HCT116 (cell line): ENCODE measurements at regions of chr5 and their contacts with region 1.

Region 1: GRCh38 chr5:168219515-168220410 is 71.7 kb upstream of the WWC1 start:
- DNase-seq: peak; percentile 68
- ATAC-seq: peak; percentile 88
- H3K4me3 ChIP-seq: no peak overlapping the region; a peak in 1 of 4 replicates
- H3K27ac ChIP-seq: no peak overlapping the region
- H3K4me1 ChIP-seq: peaks cover 0 to 4% of the 10 kb centered on the region in 2 experiments; a peak in 2 of 4 replicates
- H3K27me3 ChIP-seq: peaks cover 28% of the 10 kb centered on the region
- CTCF ChIP-seq: peak; percentile 76 to 89 (median 83)
- POLR2A ChIP-seq: no peak
- RAD21 ChIP-seq: peak; percentile 89

Region 2: GRCh38 chr5:167582283-167582682 is 637.5 kb before region 1 on chr5:
- CTCF ChIA-PET with region 1: no interaction called
- POLR2A ChIA-PET with region 1: no interaction called
- RAD21 ChIA-PET with region 1: no interaction called
- intact Hi-C with region 1: loop called (anchors 2 kb)
- DNase-seq: no peak
- ATAC-seq: no peak
- H3K4me3 ChIP-seq: no peak overlapping the region
- H3K27ac ChIP-seq: no peak overlapping the region
- H3K4me1 ChIP-seq: no peaks in the 10 kb centered on the region
- H3K27me3 ChIP-seq: peaks cover 23% of the 10 kb centered on the region
- CTCF ChIP-seq: peak in 1 of 3 experiments; percentile 40; a peak in 1 of 6 replicates
- POLR2A ChIP-seq: no peak
- RAD21 ChIP-seq: peak; percentile 38; the same call in 1 of the 2 replicates

Region 3: GRCh38 chr5:167723254-167723871 is 496.4 kb before region 1 on chr5:
- CTCF ChIA-PET with region 1: interaction called, 5 read pairs
- POLR2A ChIA-PET with region 1: no interaction called
- RAD21 ChIA-PET with region 1: no interaction called
- intact Hi-C with region 1: loop called (anchors 2 kb)
- DNase-seq: peak; percentile 72
- ATAC-seq: peak; percentile 98
- H3K4me3 ChIP-seq: no peak overlapping the region
- H3K27ac ChIP-seq: no peak overlapping the region
- H3K4me1 ChIP-seq: peaks cover 0 to 9% of the 10 kb centered on the region in 2 experiments; a peak in 2 of 4 replicates
- H3K27me3 ChIP-seq: no peaks in the 10 kb centered on the region
- CTCF ChIP-seq: peak; percentile 55 to 93 (median 88); a peak in 5 of 6 replicates
- POLR2A ChIP-seq: no peak
- RAD21 ChIP-seq: peak; percentile 66

Region 4: GRCh38 chr5:168047043-168047668 is 172.6 kb before region 1 on chr5:
- CTCF ChIA-PET with region 1: no interaction called
- POLR2A ChIA-PET with region 1: no interaction called
- RAD21 ChIA-PET with region 1: no interaction called
- intact Hi-C with region 1: loop called (anchors 1 kb)
- DNase-seq: peak; percentile 41
- ATAC-seq: peak; percentile 93
- H3K4me3 ChIP-seq: no peak overlapping the region
- H3K27ac ChIP-seq: no peak overlapping the region
- H3K4me1 ChIP-seq: no peaks in the 10 kb centered on the region
- H3K27me3 ChIP-seq: peaks cover 16% of the 10 kb centered on the region; the same call in 1 of the 2 replicates
- CTCF ChIP-seq: peak; percentile 48 to 69 (median 55); a peak in 4 of 6 replicates
- POLR2A ChIP-seq: no peak
- RAD21 ChIP-seq: peak; percentile 73

Region 5: GRCh38 chr5:168086104-168086610 is 133.6 kb before region 1 on chr5:
- CTCF ChIA-PET with region 1: no interaction called
- POLR2A ChIA-PET with region 1: no interaction called
- RAD21 ChIA-PET with region 1: no interaction called
- intact Hi-C with region 1: no loop called
- DNase-seq: no peak
- ATAC-seq: peak; percentile 83
- H3K4me3 ChIP-seq: no peak overlapping the region
- H3K27ac ChIP-seq: no peak overlapping the region
- H3K4me1 ChIP-seq: no peaks in the 10 kb centered on the region
- H3K27me3 ChIP-seq: peaks cover 22% of the 10 kb centered on the region; the same call in 1 of the 2 replicates
- CTCF ChIP-seq: no peak
- POLR2A ChIP-seq: no peak
- RAD21 ChIP-seq: no peak

Region 6: GRCh38 chr5:168114444-168115017 is 105.2 kb before region 1 on chr5:
- CTCF ChIA-PET with region 1: interaction called, 12 read pairs
- POLR2A ChIA-PET with region 1: no interaction called
- RAD21 ChIA-PET with region 1: no interaction called
- intact Hi-C with region 1: loop called (anchors 1 kb)
- DNase-seq: peak; percentile 55
- ATAC-seq: peak; percentile 99
- H3K4me3 ChIP-seq: no peak overlapping the region
- H3K27ac ChIP-seq: no peak overlapping the region
- H3K4me1 ChIP-seq: no peaks in the 10 kb centered on the region
- H3K27me3 ChIP-seq: peaks cover 39% of the 10 kb centered on the region
- CTCF ChIP-seq: peak; percentile 58 to 94 (median 89); a peak in 5 of 6 replicates
- POLR2A ChIP-seq: no peak
- RAD21 ChIP-seq: peak; percentile 65